Calu3 (cell line): ENCODE measurements at regions of chr3 and their contacts with region 1.

Region 1: DNA sequence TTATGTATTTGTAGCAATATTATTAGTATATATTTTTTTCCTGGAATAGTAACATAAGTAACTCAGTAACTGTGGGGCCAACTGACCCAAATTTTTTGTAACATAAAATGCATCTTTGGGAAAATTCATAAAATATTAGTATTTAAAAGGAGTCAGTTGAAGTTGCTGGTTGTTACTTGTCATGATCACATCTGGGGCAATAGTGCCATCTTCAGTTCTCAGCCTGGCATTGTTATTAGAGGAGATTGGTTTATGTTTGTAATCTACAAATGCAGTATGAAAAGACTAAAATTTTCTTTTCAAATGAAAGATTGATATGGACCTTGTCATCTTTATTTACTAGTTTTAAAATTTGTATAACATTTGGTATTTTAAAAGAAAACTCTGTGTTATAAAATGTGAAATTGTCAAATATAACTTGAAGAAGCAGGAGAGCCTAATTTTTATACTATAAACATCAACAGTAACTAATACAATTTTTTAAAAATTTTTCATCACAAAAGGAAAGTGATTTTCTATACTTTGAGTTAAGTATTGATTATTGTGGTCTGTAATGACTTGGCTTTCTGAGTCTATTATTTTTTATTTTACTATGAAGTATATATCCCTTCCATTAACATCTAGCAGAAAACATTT is 38.8 kb upstream of the MLF1 start:
- DNase-seq: peak; percentile 50
- H3K4me3 Mint-ChIP-seq: no peak overlapping the region
- H3K27ac Mint-ChIP-seq: no peak overlapping the region
- H3K4me1 Mint-ChIP-seq: peaks cover 8% of the 10 kb centered on the region
- H3K27me3 Mint-ChIP-seq: no peaks in the 10 kb centered on the region
- CTCF ChIP-seq: peak; percentile 73

Region 2: DNA sequence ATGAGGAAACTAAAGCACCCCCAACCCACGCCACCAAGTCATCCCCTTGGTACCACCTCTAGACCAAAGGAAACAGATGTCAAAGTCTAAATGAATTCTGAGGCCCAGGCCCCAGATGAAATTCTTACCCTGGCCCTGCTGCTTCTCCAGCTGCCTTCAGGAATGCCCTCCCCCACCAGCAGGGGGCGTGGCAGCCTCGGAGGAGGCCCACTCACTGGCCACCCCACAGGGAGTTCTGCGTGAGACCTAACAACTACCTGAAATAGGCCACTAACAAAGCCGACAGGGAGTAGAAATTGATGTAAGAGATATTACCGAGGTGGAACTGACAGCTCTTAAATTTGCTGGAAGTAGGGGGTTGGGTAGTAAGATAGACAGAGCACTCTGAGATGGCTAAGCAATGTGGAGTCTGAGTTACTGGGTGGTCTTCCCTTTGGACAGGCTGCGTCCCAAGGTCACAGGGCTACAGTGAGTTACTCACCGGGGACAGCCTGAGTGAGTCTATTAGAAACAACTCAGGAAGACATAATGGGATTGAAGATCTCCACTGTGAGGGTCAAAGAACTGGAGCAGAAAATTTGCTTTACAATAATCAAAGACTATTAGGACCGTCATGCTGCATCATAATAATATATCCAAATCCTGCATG is 666.7 kb before region 1 on chr3:
- CTCF ChIA-PET with region 1: no interaction called
- intact Hi-C with region 1: loop called (anchors 5 kb)
- DNase-seq: peak; percentile 88
- H3K4me3 Mint-ChIP-seq: no peak overlapping the region
- H3K27ac Mint-ChIP-seq: no peak overlapping the region
- H3K4me1 Mint-ChIP-seq: no peaks in the 10 kb centered on the region
- H3K27me3 Mint-ChIP-seq: peaks cover 14% of the 10 kb centered on the region
- CTCF ChIP-seq: peak; percentile 89

Region 3: GRCh38 chr3:158261371-158261979 is 270.7 kb before region 1 on chr3:
- CTCF ChIA-PET with region 1: no interaction called
- intact Hi-C with region 1: loop called (anchors 5 kb)
- DNase-seq: no peak
- H3K4me3 Mint-ChIP-seq: no peak overlapping the region
- H3K27ac Mint-ChIP-seq: no peak overlapping the region
- H3K4me1 Mint-ChIP-seq: no peaks in the 10 kb centered on the region
- H3K27me3 Mint-ChIP-seq: no peaks in the 10 kb centered on the region
- CTCF ChIP-seq: no peak

Region 4: DNA sequence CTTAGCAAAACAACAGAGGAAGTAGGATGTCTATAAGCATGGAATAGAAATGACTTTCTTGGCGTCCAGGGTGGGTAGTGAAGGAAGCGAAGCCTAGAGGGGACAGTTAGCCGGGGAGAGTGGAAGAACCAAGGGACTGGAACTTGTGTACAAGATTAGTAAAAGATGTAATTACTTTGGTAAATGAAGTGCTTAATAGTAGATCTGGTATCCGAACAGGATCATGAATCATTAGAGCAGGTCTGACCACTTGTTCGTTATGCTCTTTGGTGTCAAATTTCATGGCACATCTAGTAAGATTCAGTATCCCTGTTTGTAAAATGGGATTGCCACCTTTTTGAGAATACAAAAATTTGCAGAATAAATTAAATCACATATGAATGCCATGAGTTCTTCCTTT is 73.7 kb before region 1 on chr3:
- CTCF ChIA-PET with region 1: no interaction called
- intact Hi-C with region 1: loop called (anchors 5 kb)
- DNase-seq: peak; percentile 29
- H3K4me3 Mint-ChIP-seq: peak overlapping the region; percentile 16
- H3K27ac Mint-ChIP-seq: peak overlapping the region; percentile 25
- H3K4me1 Mint-ChIP-seq: peaks cover 23% of the 10 kb centered on the region
- H3K27me3 Mint-ChIP-seq: no peaks in the 10 kb centered on the region
- CTCF ChIP-seq: no peak